ENCODE measurements at regions of chr14 and their contacts with region 1.

Region 1: DNA sequence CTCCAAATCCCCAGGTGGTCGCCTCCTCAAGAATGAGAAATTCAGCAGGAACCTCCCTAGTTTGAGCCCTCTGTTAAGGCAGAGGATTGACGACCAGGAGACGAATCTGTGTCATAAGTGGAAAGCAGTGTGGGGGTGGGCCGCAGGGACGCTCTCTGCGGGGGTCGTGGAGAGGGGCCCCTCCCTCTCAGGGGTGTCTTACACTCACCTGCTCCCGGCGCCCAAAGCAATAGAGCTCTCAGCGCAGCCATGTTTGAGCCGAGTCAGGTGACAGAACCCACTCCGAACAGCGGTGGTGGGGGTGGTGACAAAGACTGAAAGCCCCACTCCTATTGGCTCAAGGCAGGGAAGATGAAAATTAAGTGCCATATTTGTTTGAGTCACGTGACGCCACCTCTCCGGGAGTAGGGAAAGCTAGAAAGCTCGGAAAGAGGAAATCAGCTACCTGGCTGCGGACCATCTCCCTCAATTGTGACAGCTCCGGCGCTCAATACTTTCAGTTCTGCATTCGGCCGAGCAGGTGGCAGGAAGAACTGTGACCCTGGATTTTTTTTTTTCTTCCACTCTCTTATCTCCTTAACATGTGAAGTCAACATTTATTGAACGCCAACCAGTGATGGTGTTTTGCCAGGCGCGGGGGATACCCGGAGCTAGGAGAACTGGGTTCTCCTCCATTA is at the start of gene ZFYVE26:
- H3K4me3 Mint-ChIP-seq: peak within 1 kb of the TSS; percentile 83
- H3K27ac Mint-ChIP-seq: peak within 1 kb of the TSS; percentile 94
- H3K4me1 Mint-ChIP-seq: peaks cover 71% of the 10 kb centered on the region
- H3K27me3 Mint-ChIP-seq: no peaks in the 10 kb centered on the region

Region 2: DNA sequence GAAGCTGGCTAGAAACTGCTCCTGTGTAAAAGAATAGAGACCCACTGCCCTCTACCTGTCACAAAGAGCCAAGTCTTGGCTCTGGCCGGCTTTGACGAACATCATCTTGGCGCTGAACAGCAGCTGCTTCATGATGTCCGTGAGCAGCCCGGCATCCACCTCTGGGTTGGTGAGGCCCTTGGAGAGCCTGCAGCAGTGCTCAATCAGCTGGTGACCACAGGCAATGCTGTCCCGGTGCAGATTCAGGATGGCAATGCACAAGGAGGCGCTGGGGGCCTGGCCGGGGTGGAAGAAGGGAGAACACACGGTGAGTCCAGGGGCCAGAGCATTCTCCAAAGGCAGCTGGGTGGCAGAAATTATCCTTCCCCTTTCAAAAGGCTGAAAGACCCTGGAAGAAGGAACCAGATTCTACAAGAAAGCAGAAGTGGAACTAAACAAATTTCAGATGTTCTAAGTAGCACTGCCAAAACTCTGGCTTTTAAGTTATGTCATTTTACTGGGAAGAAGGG is 50.2 kb before region 1 on chr14:
- intact Hi-C with region 1: loop called (anchors 10 kb)
- H3K4me3 Mint-ChIP-seq: peak overlapping the region; percentile 73
- H3K27ac Mint-ChIP-seq: peak overlapping the region; percentile 84
- H3K4me1 Mint-ChIP-seq: peaks cover 51% of the 10 kb centered on the region
- H3K27me3 Mint-ChIP-seq: no peaks in the 10 kb centered on the region

Region 3: DNA sequence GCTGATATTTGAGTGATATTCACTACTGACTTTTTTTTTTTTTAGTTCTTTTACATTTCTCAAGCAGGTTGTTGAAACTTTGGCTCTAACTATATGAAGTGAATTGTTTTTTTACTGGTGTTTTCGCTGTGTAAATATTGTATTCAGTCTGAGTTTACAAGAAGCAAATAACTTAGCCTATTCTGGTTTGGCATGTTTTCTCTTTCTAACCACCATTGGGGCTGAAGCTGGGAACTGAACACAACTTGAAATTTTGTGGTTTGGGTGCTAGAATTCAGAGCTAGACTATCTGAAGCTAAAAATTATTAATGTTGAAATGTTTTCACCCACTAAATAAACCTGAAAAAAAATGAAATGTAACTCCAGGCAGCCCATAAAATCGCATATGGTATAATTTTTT is 40.4 kb after region 1 on chr14:
- intact Hi-C with region 1: no loop called
- H3K4me3 Mint-ChIP-seq: no peak overlapping the region
- H3K27ac Mint-ChIP-seq: no peak overlapping the region
- H3K4me1 Mint-ChIP-seq: peaks cover 34% of the 10 kb centered on the region
- H3K27me3 Mint-ChIP-seq: no peaks in the 10 kb centered on the region